ENCODE measurements at regions of chr4 and their contacts with region 1.

Region 1: DNA sequence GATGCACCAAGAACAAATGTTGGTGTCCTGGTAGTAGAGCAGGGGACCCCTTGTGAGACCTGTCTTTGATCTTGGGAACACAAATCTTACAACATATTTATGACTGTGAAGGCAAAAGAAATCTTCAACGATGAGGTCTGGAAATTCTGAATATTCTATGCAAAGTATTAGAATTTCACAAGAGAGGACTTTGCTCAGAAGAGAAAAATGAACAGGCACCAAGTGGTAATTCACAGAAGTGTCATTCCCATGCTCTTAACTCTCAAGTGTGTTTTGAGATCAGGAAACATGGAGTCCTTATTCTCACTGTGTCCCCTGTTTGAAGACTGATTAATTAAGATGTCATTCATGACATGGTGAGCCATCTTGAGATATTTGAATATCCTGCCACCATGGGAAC is 52.5 kb downstream of the COQ2 start:
- DNase-seq: no peak
- ATAC-seq: no peak
- H3K4me3 Mint-ChIP-seq: no peak overlapping the region
- H3K27ac Mint-ChIP-seq: peak overlapping the region; percentile 45
- H3K4me1 Mint-ChIP-seq: peaks cover 50% of the 10 kb centered on the region
- H3K27me3 Mint-ChIP-seq: peaks cover 65% of the 10 kb centered on the region

Region 2: DNA sequence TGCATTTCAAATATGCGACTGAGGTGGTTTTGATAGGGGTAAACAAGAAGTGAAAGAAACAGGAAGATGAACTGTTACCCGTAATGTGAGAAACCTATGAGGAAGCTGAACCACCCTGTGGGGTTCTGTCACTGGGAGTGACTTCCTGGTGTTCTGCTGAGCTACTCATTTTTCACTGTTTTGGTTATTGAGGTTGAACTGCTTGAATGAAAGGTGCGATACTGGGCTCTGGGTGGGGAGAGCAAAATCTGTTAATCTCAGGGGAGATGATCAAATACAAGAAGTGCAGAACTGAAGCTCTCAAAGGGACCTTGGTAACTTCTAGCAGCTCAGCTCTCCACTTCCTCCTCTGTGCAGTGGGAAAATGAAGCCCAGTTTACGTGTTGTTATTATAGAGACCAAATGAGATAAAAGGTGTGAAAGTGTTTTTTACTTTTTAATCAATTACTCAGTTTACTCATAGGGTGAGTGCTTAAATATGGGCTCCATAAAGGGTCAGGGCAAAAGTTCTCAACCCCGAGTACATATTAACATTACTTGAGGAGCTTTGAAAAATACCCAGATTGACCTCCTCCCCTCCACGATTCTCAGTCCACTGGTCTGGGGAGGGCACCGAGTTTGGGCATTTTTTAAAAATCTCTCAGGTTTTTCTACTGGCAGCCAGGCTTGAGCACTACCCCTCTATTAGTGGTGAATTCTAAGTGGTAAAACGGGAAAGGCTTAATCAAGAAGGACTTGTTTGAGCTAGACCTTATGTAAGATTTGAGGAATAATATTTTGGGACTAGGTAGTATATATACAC is 14.2 kb before region 1 on chr4:
- CTCF ChIA-PET with region 1: interaction called, 15 read pairs
- DNase-seq: peak; percentile 91
- ATAC-seq: peak; percentile 90
- H3K4me3 Mint-ChIP-seq: peak overlapping the region; percentile 41
- H3K27ac Mint-ChIP-seq: peak overlapping the region; percentile 85
- H3K4me1 Mint-ChIP-seq: peaks cover 61% of the 10 kb centered on the region
- H3K27me3 Mint-ChIP-seq: peaks cover 19% of the 10 kb centered on the region

Measured in activated CD8-positive, alpha-beta memory T cell treated with anti-CD3 and anti-CD28 coated beads, Interleukin-2, amount 10 ng/mL, durations not matched to agents 7 days and 5 days (primary cell).